Activated CD4-positive, alpha-beta T cell treated with anti-CD3 and anti-CD28 coated beads, Interleukin-2, amount 10 ng/mL, durations not matched to agents 7 days and 5 days (primary cell): ENCODE measurements at regions of chr5 and their contacts with region 1.

Region 1: DNA sequence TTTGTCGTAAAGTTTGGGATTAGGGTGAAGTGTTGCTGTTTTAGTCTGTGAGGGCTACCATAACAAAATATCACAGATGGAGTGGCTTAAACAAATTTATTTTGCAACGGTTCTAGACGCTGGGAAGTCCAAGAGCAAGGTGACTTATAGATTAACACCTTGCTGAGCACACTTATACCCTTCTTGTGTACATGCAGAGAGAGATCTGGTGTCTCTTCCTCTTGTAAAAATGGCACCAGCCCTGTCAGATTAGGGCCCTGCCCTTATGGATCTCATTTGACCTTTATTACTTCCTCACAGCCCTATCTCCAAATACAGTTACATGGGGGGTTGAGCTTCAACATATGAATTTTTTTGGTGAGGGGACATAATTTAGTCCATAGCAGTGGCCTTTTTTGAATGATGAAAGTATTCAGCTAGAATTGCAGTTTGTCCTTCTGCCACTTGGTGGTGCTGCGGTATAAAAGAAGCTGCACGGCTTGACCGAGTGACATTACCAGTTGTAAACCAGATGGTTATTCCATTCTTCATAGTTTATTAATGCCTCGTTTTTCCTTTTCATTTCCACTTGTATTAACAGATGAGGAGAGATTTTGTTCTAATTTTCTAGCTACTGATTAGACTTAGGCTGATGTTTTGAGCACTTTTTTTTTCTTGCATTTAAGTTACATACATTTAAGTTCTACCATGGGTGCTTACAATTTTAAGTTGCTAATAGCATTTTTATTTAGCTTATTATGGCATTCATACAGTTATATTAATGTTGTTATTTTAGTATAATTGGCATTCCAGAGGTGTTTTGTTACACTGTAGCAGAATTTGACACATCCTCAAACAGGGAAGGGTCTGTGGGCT is 19.4 kb downstream of the DCP2 start:
- DNase-seq: peak; percentile 81
- H3K4me3 Mint-ChIP-seq: no peak overlapping the region
- H3K27ac Mint-ChIP-seq: no peak overlapping the region
- H3K4me1 Mint-ChIP-seq: peaks cover 20% of the 10 kb centered on the region
- H3K27me3 Mint-ChIP-seq: no peaks in the 10 kb centered on the region

Region 2: GRCh38 chr5:112976432-112977309 is 19.3 kb before region 1 on chr5 and contains the start of gene DCP2:
- CTCF ChIA-PET with region 1: interaction called, 11 read pairs
- POLR2A ChIA-PET with region 1: no interaction called
- DNase-seq: peak; percentile 97
- H3K4me3 Mint-ChIP-seq: peak within 1 kb of the TSS; percentile 95
- H3K27ac Mint-ChIP-seq: peak within 1 kb of the TSS; percentile 94
- H3K4me1 Mint-ChIP-seq: peaks cover 49% of the 10 kb centered on the region
- H3K27me3 Mint-ChIP-seq: no peaks in the 10 kb centered on the region
- total RNA-seq, gene DCP2: 116 to 122 TPM